ENCODE measurements at regions of chr22 and their contacts with region 1.

Region 1: DNA sequence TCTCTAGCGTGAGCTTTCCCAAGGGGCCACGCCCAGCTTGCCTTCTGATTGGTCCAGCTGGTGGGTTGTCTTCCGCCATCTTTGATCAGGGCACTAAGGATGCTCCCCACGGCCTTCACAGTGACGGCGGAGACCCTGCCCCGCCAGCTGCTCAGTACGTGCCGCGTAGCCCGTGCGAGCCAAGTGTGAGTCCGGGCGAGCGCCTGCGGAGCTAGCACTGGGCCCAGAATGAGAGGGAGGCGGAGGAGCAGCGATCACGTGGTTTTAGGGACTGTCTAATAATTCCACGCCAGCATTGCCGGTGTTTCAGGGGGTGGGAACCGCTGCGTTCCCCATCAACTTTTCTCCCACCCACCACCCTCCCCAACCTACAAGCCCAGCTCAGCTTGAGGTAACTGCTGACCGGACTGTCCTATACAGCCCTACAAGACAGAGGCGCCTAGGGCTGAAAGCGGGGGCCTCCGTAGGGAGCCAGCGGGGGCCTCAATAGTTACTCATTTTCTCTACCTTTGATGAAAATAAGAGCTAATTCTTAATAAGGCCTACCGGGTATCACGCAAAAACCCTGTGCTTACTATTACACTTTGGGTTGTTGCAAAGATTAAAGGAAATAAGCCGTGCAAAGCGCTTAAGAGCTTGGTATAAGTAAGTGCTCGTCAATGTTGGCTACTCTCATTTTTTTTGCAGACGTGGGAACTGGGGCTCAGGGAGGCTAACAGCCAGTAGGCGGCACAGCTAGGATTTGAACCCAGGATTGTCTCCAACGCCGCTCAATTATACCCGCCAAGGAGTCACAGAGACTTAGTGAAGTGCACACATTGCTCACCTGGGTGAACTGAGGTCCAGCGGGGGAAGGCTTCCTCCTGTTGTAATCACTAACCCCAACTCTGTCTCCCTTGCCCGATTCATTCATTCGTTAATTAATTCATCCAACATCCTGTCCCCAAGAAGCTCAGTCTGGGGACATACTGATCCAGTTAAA is 1.3 kb upstream of the MTFP1 start:
- DNase-seq: peak; percentile 99

Region 2: GRCh38 chr22:30373331-30374325 is 50.6 kb before region 1 on chr22:
- intact Hi-C with region 1: no loop called
- DNase-seq: no peak

Region 3: DNA sequence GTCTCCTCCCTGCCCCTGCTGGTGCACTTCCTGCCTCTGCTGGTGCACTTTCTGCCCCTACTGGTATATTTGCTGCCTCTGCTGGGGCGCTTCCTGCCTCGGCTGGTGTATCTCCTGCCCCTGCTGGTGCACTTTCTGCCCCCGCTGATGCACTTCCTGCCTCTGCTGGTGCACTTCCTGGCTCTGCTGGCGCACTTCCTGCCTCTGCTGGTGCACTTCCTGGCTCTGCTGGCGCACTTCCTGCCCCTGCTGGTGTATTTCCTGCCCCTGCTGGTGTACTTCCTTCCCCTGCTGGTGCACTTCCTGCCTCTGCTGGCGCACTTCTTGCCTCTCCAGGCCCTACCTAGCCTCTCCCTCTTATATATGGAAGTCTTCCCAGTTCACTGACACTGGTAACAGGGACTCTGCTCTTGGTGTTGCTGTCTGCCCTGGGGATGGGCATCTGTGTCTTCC is 11.4 kb after region 1 on chr22:
- intact Hi-C with region 1: no loop called
- DNase-seq: peak; percentile 75

Region 4: DNA sequence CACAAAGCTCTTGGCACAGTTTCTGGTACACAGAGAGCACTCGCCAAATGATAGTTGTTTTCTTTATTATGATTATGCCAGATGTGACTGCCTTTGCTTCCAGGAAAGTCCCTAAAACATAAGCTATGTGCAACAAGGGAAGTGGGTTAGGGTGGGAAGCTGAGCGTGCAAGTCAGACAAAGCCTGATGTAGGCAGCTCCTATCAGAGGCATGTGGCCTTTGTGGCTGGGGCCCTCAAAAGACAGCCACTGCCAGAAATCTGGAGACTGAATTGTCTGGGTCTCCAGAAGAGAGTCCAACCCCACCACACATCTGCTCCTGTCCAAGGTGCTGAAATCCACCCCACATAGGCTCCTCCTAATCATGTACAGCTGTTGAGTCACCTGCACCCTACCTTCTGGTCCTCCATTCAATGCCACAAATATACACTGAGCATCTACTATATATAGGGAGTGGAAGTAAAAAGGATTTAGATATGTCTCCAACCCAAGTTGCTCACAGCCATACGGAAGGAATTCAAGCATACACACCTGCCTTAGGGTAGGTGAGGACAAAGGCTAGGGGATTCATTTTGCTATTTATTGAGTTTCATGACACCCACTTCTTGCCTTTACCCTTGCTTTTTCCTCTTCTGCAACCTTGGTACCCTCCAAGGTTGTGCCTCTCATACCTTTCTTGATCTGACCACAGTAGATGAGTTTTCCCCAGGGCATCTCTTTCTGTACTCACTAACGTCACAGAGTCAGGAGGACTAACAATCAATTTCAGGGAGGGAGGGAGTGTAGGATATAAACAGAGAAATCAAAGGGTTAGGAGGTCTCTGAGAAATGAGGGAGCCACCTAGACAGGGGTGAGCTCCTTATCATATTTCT is 35.1 kb after region 1 on chr22:
- intact Hi-C with region 1: no loop called
- DNase-seq: no peak

Region 5: GRCh38 chr22:30591588-30592359 is 167.5 kb after region 1 on chr22 and contains the start of gene PES1:
- intact Hi-C with region 1: loop called (anchors 10 kb)
- DNase-seq: peak; percentile 96
- total RNA-seq, gene PES1: 28.1 TPM

Measured in cardiac septum (tissue), 1 donor.